Psoas muscle (tissue), 8 donors: ENCODE measurements at regions of chr17 and their contacts with region 1.

Region 1: DNA sequence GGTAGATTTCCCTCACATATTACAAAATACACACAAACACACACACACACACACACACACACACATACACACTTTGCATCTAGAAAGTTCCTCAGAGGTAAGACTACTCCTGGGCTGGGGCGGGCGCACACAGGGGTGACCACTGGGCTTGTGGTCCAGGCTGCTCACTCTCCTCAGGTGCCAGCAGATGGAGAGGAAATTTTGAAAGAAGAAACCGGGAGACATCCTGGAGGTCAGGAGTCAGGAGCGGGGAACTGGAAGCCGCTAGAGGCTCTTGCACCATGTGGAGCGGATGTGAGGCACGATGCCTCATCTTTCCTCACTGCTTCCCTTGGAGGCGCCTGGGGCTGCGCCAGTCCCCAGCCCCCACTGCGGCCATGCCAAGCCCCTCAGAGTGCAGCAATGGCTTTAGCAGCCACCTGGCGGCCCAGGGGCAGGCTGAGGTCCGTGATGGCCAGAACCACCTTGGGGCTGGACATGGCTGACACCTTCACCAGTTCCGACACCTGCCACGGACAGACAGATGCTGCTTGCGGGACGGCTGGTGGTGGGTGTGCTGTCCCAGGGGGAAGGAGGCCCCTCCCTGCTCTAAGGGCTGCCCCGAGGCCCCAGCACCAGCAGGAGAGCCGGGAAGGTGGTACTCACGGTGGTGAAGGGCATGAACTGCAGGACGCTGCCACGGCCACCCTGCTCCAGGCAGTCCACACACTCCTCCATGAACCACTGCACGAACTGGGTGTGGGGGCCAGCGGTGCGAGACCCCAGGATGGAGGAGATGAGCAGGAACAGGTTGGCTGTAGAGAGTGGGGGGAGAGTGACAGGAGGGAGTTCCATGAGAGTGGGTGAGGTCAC is 4.1 kb downstream of the CSF3 start:
- DNase-seq: peak; percentile 81 to 93
- ATAC-seq: peak; percentile 46 to 56 (median 48)
- H3K4me3 ChIP-seq: no peak overlapping the region
- H3K27ac ChIP-seq: peak overlapping the region; percentile 87
- H3K4me1 ChIP-seq: peaks cover 84% of the 10 kb centered on the region
- H3K27me3 ChIP-seq: no peaks in the 10 kb centered on the region
- CTCF ChIP-seq: no peak

Region 2: GRCh38 chr17:40086150-40087044 is 67.0 kb after region 1 on chr17:
- intact Hi-C with region 1: loop called in 1 of 2 experiments (anchors 5 kb)
- DNase-seq: peak; percentile 75 to 87
- ATAC-seq: peak; percentile 58 to 75 (median 70)
- H3K4me3 ChIP-seq: no peak overlapping the region
- H3K27ac ChIP-seq: peak overlapping the region; percentile 61
- H3K4me1 ChIP-seq: peaks cover 12% of the 10 kb centered on the region
- H3K27me3 ChIP-seq: no peaks in the 10 kb centered on the region
- CTCF ChIP-seq: peak; percentile 91

Region 3: DNA sequence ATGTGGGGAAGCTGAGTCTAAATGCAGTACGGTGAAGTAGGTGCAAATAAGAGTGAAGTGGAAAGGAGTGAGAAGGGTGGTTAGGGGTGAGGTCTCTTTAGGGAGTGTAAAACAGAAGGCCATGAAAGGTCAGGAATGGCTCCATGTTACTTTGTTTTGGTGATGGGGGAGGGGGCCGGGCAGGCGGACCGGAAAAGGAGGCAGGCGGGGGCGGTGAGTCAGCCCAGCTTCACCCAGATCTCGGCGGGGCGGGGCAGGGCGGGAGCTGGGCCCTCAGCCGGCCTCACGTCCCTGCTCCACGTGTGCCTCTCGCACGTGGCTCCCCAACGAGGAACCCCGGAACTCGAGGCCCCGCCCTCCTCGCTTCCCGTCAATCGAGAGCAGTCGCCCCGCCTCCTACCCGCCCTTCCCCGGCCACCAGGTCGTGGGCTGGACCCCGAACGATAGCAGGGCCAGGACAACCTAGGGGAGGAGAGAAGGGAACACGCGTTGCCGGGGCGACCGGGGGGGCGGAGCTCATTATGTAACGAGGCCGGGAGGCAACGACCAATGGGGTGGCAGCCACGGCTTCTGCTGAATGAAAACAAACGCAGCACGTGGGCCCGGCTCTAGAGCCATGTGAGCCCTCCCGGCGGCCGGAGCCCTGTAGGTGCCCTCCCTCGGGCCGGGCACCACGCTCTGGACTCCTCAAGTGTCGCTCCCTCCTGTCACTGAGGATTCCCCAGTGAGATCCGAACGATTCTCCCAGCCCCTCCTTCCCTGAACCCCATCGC is 79.7 kb after region 1 on chr17:
- intact Hi-C with region 1: loop called in 1 of 2 experiments (anchors 5 kb)
- DNase-seq: peak; percentile 100
- ATAC-seq: peak; percentile 67 to 74 (median 69)
- H3K4me3 ChIP-seq: peak overlapping the region; percentile 98
- H3K27ac ChIP-seq: peak overlapping the region; percentile 99
- H3K4me1 ChIP-seq: peaks cover 72% of the 10 kb centered on the region
- H3K27me3 ChIP-seq: no peaks in the 10 kb centered on the region
- CTCF ChIP-seq: no peak